CD14-positive monocyte (primary cell): ENCODE measurements at regions of chr4 and their contacts with region 1.

Region 1: GRCh38 chr4:138249132-138249531 is 7.0 kb upstream of the SLC7A11 start:
- DNase-seq: no peak
- H3K4me3 ChIP-seq: no peak overlapping the region
- H3K4me3 Mint-ChIP-seq: no peak overlapping the region
- H3K27ac ChIP-seq: no peak overlapping the region
- H3K27ac Mint-ChIP-seq: peak overlapping the region in 1 of 7 donors; percentile 3
- H3K4me1 ChIP-seq: peaks cover 0 to 4% of the 10 kb centered on the region in 2 donors
- H3K4me1 Mint-ChIP-seq: peaks cover 4% of the 10 kb centered on the region
- H3K27me3 ChIP-seq: no peaks in the 10 kb centered on the region
- H3K27me3 Mint-ChIP-seq: peaks cover 0 to 3% (median 2%) of the 10 kb centered on the region in 3 donors
- CTCF ChIP-seq: no peak

Region 2: GRCh38 chr4:138290805-138291204 is 41.7 kb after region 1 on chr4:
- intact Hi-C with region 1: no loop called
- DNase-seq: no peak
- H3K4me3 ChIP-seq: no peak overlapping the region
- H3K4me3 Mint-ChIP-seq: no peak overlapping the region
- H3K27ac ChIP-seq: no peak overlapping the region
- H3K27ac Mint-ChIP-seq: no peak overlapping the region
- H3K4me1 ChIP-seq: no peaks in the 10 kb centered on the region
- H3K4me1 Mint-ChIP-seq: no peaks in the 10 kb centered on the region
- H3K27me3 ChIP-seq: no peaks in the 10 kb centered on the region
- H3K27me3 Mint-ChIP-seq: no peaks in the 10 kb centered on the region
- CTCF ChIP-seq: no peak

Region 3: GRCh38 chr4:138301531-138301930 is 52.4 kb after region 1 on chr4:
- intact Hi-C with region 1: loop called in 1 of 2 experiments (anchors 5 kb)
- DNase-seq: no peak
- H3K4me3 ChIP-seq: no peak overlapping the region
- H3K4me3 Mint-ChIP-seq: no peak overlapping the region
- H3K27ac ChIP-seq: no peak overlapping the region
- H3K27ac Mint-ChIP-seq: no peak overlapping the region
- H3K4me1 ChIP-seq: peaks cover 18% of the 10 kb centered on the region in 2 donors
- H3K4me1 Mint-ChIP-seq: peaks cover 26% of the 10 kb centered on the region
- H3K27me3 ChIP-seq: no peaks in the 10 kb centered on the region
- H3K27me3 Mint-ChIP-seq: peaks cover 0 to 2% (median 2%) of the 10 kb centered on the region in 3 donors
- CTCF ChIP-seq: no peak

Region 4: GRCh38 chr4:138555584-138555983 is 306.5 kb after region 1 on chr4:
- intact Hi-C with region 1: no loop called
- DNase-seq: peak in 1 of 3 donors; percentile 20
- H3K4me3 ChIP-seq: no peak overlapping the region
- H3K4me3 Mint-ChIP-seq: no peak overlapping the region
- H3K27ac ChIP-seq: no peak overlapping the region
- H3K27ac Mint-ChIP-seq: no peak overlapping the region
- H3K4me1 ChIP-seq: no peaks in the 10 kb centered on the region
- H3K4me1 Mint-ChIP-seq: no peaks in the 10 kb centered on the region
- H3K27me3 ChIP-seq: no peaks in the 10 kb centered on the region
- H3K27me3 Mint-ChIP-seq: peaks cover 0 to 4% (median 0%) of the 10 kb centered on the region in 3 donors
- CTCF ChIP-seq: peak; percentile 18